Head of caudate nucleus (tissue), 42 donors: ENCODE measurements at regions of chr6 and their contacts with region 1.

Region 1: DNA sequence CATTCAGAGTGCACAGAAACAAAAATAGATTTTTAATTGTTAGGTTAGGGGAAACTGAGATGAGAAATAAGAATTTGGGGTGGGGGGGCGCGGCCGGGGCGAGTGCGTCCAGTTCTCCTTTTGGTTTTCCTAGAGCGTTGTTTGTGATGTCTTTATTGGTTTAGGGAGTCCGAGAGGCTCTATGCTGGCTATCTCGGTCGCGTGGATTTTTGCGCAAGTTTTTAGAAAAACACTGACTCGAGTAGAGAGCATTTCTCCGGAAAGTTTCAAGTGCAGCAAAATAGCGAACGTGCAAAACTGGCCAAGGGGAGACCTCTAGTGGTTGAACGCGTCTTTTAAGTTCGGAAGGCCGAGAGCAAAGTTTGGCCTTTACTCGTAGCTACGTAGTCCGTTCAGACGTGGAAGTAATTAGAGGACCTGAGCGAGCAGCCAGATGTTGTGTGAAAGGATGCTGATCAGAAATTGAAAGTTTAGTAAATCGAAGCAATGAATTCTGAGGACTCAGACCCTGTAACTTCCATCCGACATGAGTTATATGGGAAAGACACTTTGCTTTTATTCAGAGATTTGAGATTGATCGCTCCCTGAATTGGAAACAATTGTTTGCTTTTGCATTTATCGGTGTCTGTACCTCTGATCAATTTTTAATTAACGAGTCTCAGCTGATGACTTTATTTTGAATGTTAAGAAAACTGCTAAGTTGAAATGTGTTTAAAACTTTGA is 2.7 kb downstream of the L3MBTL3 start:
- DNase-seq: peak; percentile 46 to 93 (median 82)

Region 2: DNA sequence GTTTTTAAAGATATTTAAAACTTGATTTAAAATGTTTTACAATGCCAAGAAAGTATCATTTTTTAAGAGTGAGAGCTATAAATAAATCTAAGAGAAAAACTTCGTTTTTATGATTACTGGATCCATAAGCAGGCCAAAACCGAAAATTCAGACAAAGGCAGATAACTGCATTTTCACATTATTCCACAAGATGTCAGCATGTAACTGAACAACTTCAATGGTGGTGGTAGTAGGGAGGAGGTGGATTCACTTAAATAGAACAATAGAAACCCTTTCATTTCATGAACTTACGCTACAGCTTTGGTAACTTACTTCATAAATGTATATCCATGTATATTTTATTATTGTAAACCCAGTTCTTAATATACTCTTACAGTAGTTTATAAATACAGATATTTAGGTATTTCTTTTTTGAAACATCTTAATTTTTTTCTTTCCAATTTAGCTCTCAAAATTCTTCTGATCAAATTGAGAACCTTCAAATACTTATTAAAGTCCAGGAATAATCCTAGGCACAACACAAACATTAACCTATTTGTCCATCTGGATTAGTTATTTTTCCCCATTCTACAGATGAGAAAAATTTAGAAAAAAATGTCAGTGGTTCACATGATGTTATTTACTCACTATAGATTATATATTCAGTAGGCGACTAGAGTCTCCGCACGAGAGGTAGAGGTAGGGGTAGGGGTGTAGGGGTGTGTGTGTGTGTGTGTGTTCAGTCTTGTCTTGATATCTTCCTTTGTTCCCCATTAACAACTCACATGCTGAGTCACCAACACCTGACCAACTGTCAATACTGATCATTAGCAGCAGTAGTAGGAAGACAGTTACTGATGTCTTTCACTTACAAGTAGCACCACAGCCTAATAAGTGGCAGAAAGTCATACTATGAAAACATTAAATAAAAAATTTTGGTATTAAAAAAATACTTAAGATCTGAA is 422.6 kb before region 1 on chr6:
- intact Hi-C with region 1: loop called (anchors 5 kb)
- DNase-seq: peak in 7 of 42 donors; percentile 13 to 75 (median 37)

Region 3: DNA sequence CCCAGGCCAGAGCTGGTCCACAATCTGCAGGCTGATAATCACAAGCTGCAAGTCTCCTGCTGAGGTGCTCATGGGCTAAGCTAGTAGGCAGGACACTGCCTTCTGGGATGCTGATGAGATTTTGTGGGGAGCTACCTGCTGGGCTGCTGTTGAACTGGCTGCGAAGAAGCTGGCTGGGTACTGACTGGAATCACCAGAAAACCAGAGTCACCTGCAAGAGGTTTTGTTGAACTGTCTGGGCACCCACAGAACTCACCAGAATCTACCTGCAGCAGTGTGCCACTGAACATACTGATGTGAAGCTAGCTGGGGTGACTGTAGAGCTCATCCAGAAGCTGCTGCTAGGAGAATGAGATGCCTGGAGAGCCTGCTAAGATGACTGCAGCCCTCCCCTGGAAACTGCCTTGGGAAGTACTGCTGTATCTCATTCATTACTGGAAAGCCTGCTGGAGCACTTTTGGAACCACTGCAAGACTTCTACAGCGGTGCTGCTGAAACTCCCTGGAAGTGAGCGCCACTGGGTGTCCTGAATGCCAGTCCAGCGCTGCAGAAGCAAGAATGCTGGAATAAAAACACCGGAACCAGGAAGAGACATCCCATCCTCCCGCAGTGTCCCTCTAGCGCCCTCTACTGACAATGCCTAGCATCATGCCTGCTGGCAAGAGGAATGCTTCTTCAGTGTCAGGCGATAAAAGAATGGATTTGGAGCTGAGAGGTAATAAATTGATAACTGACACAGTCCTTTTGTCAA is 246.2 kb before region 1 on chr6:
- intact Hi-C with region 1: loop called (anchors 10 kb)
- DNase-seq: peak; percentile 50 to 91 (median 81)

Region 4: GRCh38 chr6:129893640-129894039 is 127.4 kb before region 1 on chr6:
- intact Hi-C with region 1: loop called (anchors 10 kb)
- DNase-seq: no peak